Esophagus muscularis mucosa (tissue), 4 donors: ENCODE measurements at regions of chr10 and their contacts with region 1.

Region 1: DNA sequence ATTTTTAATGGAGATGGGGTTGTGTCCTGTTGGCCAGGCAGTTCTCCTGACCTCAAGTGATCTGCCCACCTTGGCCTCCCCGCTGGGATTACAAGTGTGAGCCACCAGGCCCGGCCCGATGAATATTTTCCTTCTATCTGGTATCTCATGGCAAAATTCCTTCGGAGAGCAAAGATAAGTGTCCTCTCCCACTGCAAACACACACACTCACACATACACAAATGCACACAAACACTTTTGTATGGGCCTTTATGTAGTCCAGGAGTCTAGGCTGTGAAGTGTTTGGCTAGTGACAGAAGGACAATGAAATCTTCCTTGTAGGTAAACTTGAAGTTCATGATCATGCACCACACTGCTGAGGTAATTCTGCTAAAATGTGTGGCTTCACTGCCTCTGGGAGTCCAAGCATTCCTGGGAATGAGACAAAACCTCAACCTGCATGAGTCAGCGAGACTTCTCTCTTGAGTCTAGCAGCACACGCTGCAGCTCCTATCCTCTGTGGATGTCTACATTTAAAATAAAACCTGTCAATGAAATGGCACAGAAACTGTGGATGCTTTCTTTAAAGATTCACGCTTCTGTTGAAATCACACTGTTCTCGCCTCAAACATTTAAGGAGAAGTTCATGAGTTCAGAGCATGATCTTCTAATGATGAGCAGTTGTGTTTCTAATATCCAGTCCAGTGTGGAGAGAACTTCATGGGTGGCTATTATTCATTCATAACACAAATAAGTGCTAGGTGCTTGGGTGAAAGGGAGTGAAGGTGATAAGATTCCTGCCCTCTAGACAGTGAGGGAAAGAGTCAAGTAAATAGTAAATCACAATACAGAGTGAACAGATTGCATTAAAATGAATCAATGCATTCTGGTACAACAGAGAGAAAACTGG is 96.5 kb downstream of the NRP1 start:
- DNase-seq: peak; percentile 72
- H3K4me3 ChIP-seq: no peak overlapping the region
- H3K27ac ChIP-seq: no peak overlapping the region
- H3K4me1 ChIP-seq: peaks cover 42 to 48% (median 42%) of the 10 kb centered on the region in 4 donors
- H3K27me3 ChIP-seq: no peaks in the 10 kb centered on the region
- CTCF ChIP-seq: no peak
- EP300 ChIP-seq: no peak
- POLR2A ChIP-seq: no peak

Region 2: DNA sequence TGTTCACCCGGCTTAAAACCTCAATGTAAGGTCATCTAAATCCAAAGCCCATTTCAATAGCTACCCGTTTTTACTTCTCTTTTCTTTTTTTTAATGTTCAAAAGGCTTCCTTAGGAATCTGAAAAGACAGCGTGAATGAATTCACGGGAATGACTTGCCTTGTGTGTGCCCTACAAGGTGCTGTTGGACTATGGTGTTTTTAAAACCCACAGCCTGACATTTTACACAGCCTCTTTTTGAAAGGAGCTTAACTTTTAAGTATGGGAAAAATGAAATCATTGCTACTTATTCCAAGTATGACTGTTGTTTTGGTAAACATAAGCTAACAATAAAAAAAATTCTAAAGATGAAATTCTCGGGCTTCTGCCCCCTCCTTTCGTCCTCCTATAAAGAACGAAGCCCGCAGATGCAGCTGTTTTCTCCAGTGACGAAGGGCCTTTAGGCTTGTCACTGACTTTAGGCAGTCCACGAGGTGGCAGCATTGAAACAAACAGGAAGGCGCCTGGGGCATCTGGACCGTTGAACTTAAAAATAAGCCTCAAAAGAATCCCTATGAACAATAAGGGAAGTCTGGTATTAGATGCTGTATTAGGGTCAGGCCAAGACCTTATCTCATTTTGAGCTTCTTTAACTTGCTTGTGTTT is 44.8 kb before region 1 on chr10:
- intact Hi-C with region 1: loop called (anchors 5 kb)
- DNase-seq: no peak
- H3K4me3 ChIP-seq: no peak overlapping the region
- H3K27ac ChIP-seq: peak overlapping the region; percentile 4 to 53 (median 22)
- H3K4me1 ChIP-seq: peaks cover 20 to 42% (median 40%) of the 10 kb centered on the region in 4 donors
- H3K27me3 ChIP-seq: no peaks in the 10 kb centered on the region
- CTCF ChIP-seq: peak; percentile 81 to 86 (median 81)
- EP300 ChIP-seq: no peak
- POLR2A ChIP-seq: no peak